ENCODE measurements at regions of chr6 and their contacts with region 1.

Region 1: GRCh38 chr6:10404107-10404798 is 10.6 kb downstream of the TFAP2A start:
- DNase-seq: peak; percentile 97
- H3K4me3 ChIP-seq: peak overlapping the region; percentile 51 to 97 (median 74)
- H3K27ac ChIP-seq: peak overlapping the region; percentile 99
- H3K4me1 ChIP-seq: peaks cover 79% of the 10 kb centered on the region
- H3K27me3 ChIP-seq: no peaks in the 10 kb centered on the region
- CTCF ChIP-seq: peak; percentile 4 to 50

Region 2: GRCh38 chr6:9540534-9541126 is 863.6 kb before region 1 on chr6:
- CTCF ChIA-PET with region 1: no interaction called
- dilution Hi-C with region 1: no loop called
- in situ Hi-C with region 1: loop called (anchors 25 kb)
- intact Hi-C with region 1: no loop called
- DNase-seq: peak; percentile 72
- H3K4me3 ChIP-seq: no peak overlapping the region
- H3K27ac ChIP-seq: no peak overlapping the region
- H3K4me1 ChIP-seq: no peaks in the 10 kb centered on the region
- H3K27me3 ChIP-seq: no peaks in the 10 kb centered on the region
- CTCF ChIP-seq: peak; percentile 74 to 80

Region 3: DNA sequence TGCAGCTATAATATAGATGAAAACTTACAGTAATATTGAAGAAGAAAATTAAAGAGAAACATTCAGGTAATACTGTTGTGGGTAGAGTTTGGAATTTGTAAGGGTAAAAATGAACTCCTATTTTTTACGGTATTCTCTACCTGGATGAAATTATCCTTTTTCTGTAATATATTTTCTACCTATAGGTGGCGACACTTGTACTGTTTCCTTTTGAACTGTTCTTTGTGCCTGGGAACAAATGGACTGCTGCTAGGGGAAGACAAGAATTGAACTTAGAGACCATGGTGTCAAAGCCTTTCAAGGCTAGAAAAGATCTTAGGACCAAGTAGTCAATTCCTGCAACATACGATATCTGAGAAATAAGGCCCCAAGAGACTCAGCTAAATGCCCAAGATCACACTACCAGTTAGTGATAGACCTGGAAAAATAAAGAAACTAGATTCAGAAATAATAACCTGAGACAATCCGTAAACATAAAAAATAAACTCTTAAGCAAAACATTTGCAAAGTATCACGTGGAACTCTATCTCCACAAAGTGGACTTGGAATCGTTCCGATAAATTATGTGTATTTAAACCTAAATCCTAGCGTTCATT is 373.2 kb before region 1 on chr6:
- CTCF ChIA-PET with region 1: no interaction called
- dilution Hi-C with region 1: no loop called
- in situ Hi-C with region 1: no loop called
- intact Hi-C with region 1: loop called (anchors 2 kb)
- DNase-seq: peak; percentile 16
- H3K4me3 ChIP-seq: no peak overlapping the region
- H3K27ac ChIP-seq: no peak overlapping the region
- H3K4me1 ChIP-seq: no peaks in the 10 kb centered on the region
- H3K27me3 ChIP-seq: no peaks in the 10 kb centered on the region
- CTCF ChIP-seq: peak; percentile 53 to 60

Region 4: DNA sequence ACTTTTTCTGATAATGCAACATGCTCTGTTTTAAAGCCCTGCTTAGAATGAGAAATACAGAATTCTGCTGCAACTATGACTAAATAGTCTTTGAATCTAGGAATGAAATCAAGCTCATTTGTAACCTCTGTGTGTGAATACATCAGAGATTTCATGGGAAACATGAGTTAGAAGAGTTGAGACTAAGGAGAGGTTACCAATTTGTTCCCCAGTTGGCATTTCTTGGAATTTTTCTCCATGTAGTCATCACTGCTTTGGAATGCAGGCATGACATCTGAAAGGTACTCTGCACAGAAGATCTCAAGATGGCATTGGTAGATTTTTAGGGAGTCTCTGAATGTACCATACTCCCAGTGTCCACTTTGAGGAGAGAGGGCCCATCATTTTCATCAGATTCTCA is 226.6 kb before region 1 on chr6:
- CTCF ChIA-PET with region 1: no interaction called
- dilution Hi-C with region 1: no loop called
- in situ Hi-C with region 1: no loop called
- intact Hi-C with region 1: loop called (anchors 5 kb)
- DNase-seq: peak; percentile 46
- H3K4me3 ChIP-seq: no peak overlapping the region
- H3K27ac ChIP-seq: no peak overlapping the region
- H3K4me1 ChIP-seq: peaks cover 20% of the 10 kb centered on the region
- H3K27me3 ChIP-seq: no peaks in the 10 kb centered on the region
- CTCF ChIP-seq: no peak

Region 5: GRCh38 chr6:10626154-10626741 is 222.0 kb after region 1 on chr6:
- CTCF ChIA-PET with region 1: no interaction called
- dilution Hi-C with region 1: no loop called
- in situ Hi-C with region 1: no loop called
- intact Hi-C with region 1: no loop called
- DNase-seq: no peak
- H3K4me3 ChIP-seq: no peak overlapping the region
- H3K27ac ChIP-seq: no peak overlapping the region
- H3K4me1 ChIP-seq: no peaks in the 10 kb centered on the region
- H3K27me3 ChIP-seq: no peaks in the 10 kb centered on the region
- CTCF ChIP-seq: no peak

Measured in mammary epithelial cell (primary cell).